ENCODE measurements at regions of chr15 and their contacts with region 1.

Region 1: DNA sequence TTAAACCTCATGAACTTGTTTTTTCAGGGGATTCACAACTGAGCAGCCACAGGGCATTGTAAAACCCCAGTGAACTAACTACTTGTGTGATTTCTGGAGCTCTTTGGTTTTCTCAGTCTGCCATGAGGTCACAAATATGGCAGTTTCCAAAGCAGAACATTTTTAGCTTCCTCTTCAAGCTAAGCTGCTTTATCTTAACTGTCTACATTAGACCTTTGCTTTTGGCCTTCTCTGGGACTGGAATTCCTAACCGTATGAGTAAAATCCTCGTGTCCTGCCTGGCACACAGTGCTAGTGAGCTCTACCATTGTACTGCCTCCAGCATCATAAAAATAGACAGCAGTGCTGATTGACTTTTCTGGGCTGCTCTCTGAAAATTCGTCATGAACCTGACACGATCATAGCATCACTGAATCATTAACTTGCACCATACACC is 22.1 kb downstream of the CDIN1 start:
- DNase-seq: peak in 1 of 2 donors; percentile 77
- ATAC-seq: peak; percentile 87 to 92 (median 90)
- H3K4me3 ChIP-seq: peak overlapping the region in 3 of 10 donors; percentile 6 to 11 (median 10)
- H3K27ac ChIP-seq: peak overlapping the region; percentile 59 to 94 (median 88)
- H3K4me1 ChIP-seq: peaks cover 0 to 61% (median 24%) of the 10 kb centered on the region in 9 donors
- H3K27me3 ChIP-seq: no peaks in the 10 kb centered on the region
- CTCF ChIP-seq: no peak

Region 2: DNA sequence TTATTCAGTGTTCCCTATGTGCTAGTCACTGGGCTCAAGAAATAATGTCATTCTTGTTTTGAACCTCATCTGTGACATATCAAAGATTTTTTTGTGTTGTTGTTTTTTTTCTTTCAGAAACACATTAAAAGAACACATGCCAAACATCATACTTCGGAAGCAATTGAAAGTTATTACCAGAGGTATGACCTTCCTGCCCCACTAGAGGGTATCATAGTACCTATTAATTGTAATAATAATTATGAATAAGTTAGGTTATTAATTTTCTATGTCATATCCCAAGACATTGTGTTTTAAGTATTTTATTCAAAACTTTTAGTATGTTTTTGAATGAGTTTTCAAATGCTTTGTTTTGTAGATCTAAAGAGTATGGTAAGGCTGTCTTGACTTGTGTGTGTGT is 43.6 kb after region 1 on chr15:
- intact Hi-C with region 1: loop called in 1 of 10 experiments (anchors 5 kb)
- DNase-seq: no peak
- ATAC-seq: no peak
- H3K4me3 ChIP-seq: no peak overlapping the region
- H3K27ac ChIP-seq: no peak overlapping the region
- H3K4me1 ChIP-seq: peaks cover 0 to 28% (median 0%) of the 10 kb centered on the region in 9 donors
- H3K27me3 ChIP-seq: no peaks in the 10 kb centered on the region
- CTCF ChIP-seq: peak in 6 of 9 donors; percentile 15 to 47 (median 27)

Measured in heart right ventricle (tissue), 16 donors.